H1 (cell line): ENCODE measurements at regions of chr10 and their contacts with region 1.

Region 1: GRCh38 chr10:73772280-73773151 is 9.3 kb upstream of the CHCHD1 start:
- DNase-seq: peak in 1 of 2 experiments; percentile 92
- H3K4me3 ChIP-seq: peak overlapping the region; percentile 84 to 91 (median 87)
- H3K27ac ChIP-seq: peak overlapping the region; percentile 65; the same call in 1 of the 2 replicates
- H3K4me1 ChIP-seq: peaks cover 3 to 13% (median 8%) of the 10 kb centered on the region in 4 experiments; a peak in 5 of 7 replicates
- H3K27me3 ChIP-seq: no peaks in the 10 kb centered on the region; a peak in 1 of 7 replicates
- CTCF ChIP-seq: peak in 1 of 3 experiments; percentile 4; a peak in 1 of 4 replicates
- EP300 ChIP-seq: no peak
- POLR2A ChIP-seq: peak in 1 of 2 experiments; percentile 63; a peak in 1 of 3 replicates
- RAD21 ChIP-seq: no peak

Region 2: GRCh38 chr10:73717556-73717955 is 55.0 kb before region 1 on chr10:
- CTCF ChIA-PET with region 1: no interaction called
- POLR2A ChIA-PET with region 1: no interaction called
- DNase-seq: no peak
- H3K4me3 ChIP-seq: no peak overlapping the region
- H3K27ac ChIP-seq: no peak overlapping the region
- H3K4me1 ChIP-seq: no peaks in the 10 kb centered on the region
- H3K27me3 ChIP-seq: no peaks in the 10 kb centered on the region
- CTCF ChIP-seq: no peak
- EP300 ChIP-seq: no peak
- POLR2A ChIP-seq: no peak
- RAD21 ChIP-seq: no peak

Region 3: GRCh38 chr10:73743905-73744663 is 28.4 kb before region 1 on chr10 and contains the start of gene SEC24C:
- CTCF ChIA-PET with region 1: interaction called, 5 read pairs
- POLR2A ChIA-PET with region 1: interaction called, 56 read pairs
- DNase-seq: peak; percentile 82 to 95
- H3K4me3 ChIP-seq: peak within 1 kb of the TSS; percentile 69 to 92 (median 82)
- H3K27ac ChIP-seq: peak within 1 kb of the TSS; percentile 93
- H3K4me1 ChIP-seq: peaks cover 5 to 20% (median 10%) of the 10 kb centered on the region in 4 experiments; a peak in 6 of 7 replicates
- H3K27me3 ChIP-seq: no peaks in the 10 kb centered on the region
- CTCF ChIP-seq: peak in 1 of 3 experiments; percentile 2; a peak in 2 of 4 replicates
- EP300 ChIP-seq: no peak
- POLR2A ChIP-seq: peak; percentile 25 to 68
- RAD21 ChIP-seq: no peak
- total RNA-seq, gene SEC24C: 63.2 and 66.8 TPM in 2 replicates

Region 4: GRCh38 chr10:73759512-73760115 is 12.9 kb before region 1 on chr10:
- CTCF ChIA-PET with region 1: interaction called, 17 read pairs
- POLR2A ChIA-PET with region 1: interaction called, 20 read pairs
- DNase-seq: no peak
- H3K4me3 ChIP-seq: no peak overlapping the region
- H3K27ac ChIP-seq: no peak overlapping the region
- H3K4me1 ChIP-seq: no peaks in the 10 kb centered on the region
- H3K27me3 ChIP-seq: no peaks in the 10 kb centered on the region
- CTCF ChIP-seq: no peak
- EP300 ChIP-seq: no peak
- POLR2A ChIP-seq: no peak
- RAD21 ChIP-seq: no peak

Region 5: GRCh38 chr10:73785221-73785720 is 12.8 kb after region 1 on chr10 and contains the start of gene ZSWIM8:
- CTCF ChIA-PET with region 1: interaction called, 13 read pairs
- POLR2A ChIA-PET with region 1: interaction called, 79 read pairs
- DNase-seq: peak; percentile 51 to 82
- H3K4me3 ChIP-seq: peak within 1 kb of the TSS; percentile 71 to 96 (median 90)
- H3K27ac ChIP-seq: no peak within 1 kb of the TSS
- H3K4me1 ChIP-seq: peaks cover 2 to 4% (median 3%) of the 10 kb centered on the region in 4 experiments; a peak in 5 of 7 replicates
- H3K27me3 ChIP-seq: no peaks in the 10 kb centered on the region
- CTCF ChIP-seq: peak in 1 of 3 experiments; percentile 2; a peak in 1 of 4 replicates
- EP300 ChIP-seq: no peak
- POLR2A ChIP-seq: no peak
- RAD21 ChIP-seq: no peak
- total RNA-seq, gene ZSWIM8: 44.7 and 49.8 TPM in 2 replicates

Region 6: DNA sequence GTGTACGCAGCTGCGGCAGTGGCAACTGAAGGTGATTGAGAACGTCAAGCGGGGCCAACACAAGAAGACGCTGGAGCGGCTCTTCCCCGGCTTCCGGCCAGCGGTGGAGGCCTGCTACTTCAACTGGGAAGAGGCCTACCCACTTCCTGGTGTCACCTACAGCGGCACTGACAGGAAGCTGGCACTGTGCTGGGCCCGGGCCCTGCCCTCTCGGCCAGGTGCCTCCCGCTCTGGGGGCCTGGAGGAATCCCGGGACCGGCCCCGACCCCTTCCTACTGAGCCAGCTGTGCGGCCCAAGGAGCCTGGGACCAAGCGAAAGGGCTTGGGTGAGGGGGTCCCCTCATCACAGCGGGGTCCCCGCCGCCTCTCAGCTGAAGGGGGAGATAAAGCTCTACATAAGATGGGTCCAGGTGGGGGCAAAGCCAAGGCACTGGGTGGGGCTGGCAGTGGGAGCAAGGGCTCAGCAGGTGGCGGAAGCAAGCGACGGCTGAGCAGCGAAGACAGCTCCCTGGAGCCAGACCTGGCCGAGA is 19.4 kb after region 1 on chr10:
- CTCF ChIA-PET with region 1: interaction called, 3 read pairs
- POLR2A ChIA-PET with region 1: interaction called, 13 read pairs
- DNase-seq: no peak
- H3K4me3 ChIP-seq: no peak overlapping the region
- H3K27ac ChIP-seq: no peak overlapping the region
- H3K4me1 ChIP-seq: no peaks in the 10 kb centered on the region
- H3K27me3 ChIP-seq: no peaks in the 10 kb centered on the region
- CTCF ChIP-seq: no peak
- EP300 ChIP-seq: no peak
- POLR2A ChIP-seq: no peak
- RAD21 ChIP-seq: no peak

Region 7: GRCh38 chr10:74137992-74138391 is 365.5 kb after region 1 on chr10:
- CTCF ChIA-PET with region 1: no interaction called
- POLR2A ChIA-PET with region 1: no interaction called
- DNase-seq: no peak
- H3K4me3 ChIP-seq: no peak overlapping the region
- H3K27ac ChIP-seq: no peak overlapping the region
- H3K4me1 ChIP-seq: no peaks in the 10 kb centered on the region
- H3K27me3 ChIP-seq: no peaks in the 10 kb centered on the region
- CTCF ChIP-seq: no peak
- EP300 ChIP-seq: no peak
- POLR2A ChIP-seq: no peak
- RAD21 ChIP-seq: no peak